ENCODE measurements at regions of chr5 and their contacts with region 1.

Region 1: GRCh38 chr5:128905571-128906110 is 59.6 kb upstream of the SLC27A6 start:
- DNase-seq: peak in 3 of 6 donors; percentile 10 to 30 (median 18)
- ATAC-seq: peak; percentile 53 to 92 (median 88)
- H3K4me3 ChIP-seq: no peak overlapping the region
- H3K27ac ChIP-seq: no peak overlapping the region
- H3K4me1 ChIP-seq: no peaks in the 10 kb centered on the region
- H3K27me3 ChIP-seq: no peaks in the 10 kb centered on the region
- CTCF ChIP-seq: peak; percentile 37 to 70 (median 62)

Region 2: GRCh38 chr5:128956164-128956563 is 50.5 kb after region 1 on chr5:
- intact Hi-C with region 1: no loop called
- DNase-seq: no peak
- ATAC-seq: no peak
- H3K4me3 ChIP-seq: no peak overlapping the region
- H3K27ac ChIP-seq: no peak overlapping the region
- H3K4me1 ChIP-seq: no peaks in the 10 kb centered on the region
- H3K27me3 ChIP-seq: no peaks in the 10 kb centered on the region
- CTCF ChIP-seq: no peak

Region 3: DNA sequence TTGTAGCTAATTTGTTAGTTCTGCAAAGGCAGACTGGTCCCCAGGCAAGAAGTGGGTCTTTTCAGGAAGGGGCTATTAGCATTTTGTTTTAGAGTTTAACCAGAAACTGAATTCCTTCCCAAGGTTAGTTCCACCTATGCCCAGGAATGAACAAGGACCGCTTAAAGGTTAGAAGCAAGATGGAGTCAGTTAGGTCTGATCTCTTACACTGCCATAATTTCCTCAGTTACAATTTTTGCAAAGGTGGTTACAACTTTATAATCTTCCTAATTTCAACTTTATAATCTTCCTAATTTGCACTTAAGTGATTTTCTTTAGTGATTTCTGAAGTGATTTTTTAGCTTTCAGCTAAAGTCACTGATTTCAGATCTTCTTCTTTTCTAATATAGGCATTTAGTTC is 273.3 kb after region 1 on chr5:
- intact Hi-C with region 1: no loop called
- DNase-seq: no peak
- ATAC-seq: no peak
- H3K4me3 ChIP-seq: no peak overlapping the region
- H3K27ac ChIP-seq: no peak overlapping the region
- H3K4me1 ChIP-seq: no peaks in the 10 kb centered on the region
- H3K27me3 ChIP-seq: no peaks in the 10 kb centered on the region
- CTCF ChIP-seq: no peak

Region 4: GRCh38 chr5:129767906-129768380 is 862.3 kb after region 1 on chr5:
- intact Hi-C with region 1: loop called in 1 of 3 experiments (anchors 10 kb)
- DNase-seq: peak in 4 of 6 donors; percentile 22 to 77 (median 63)
- ATAC-seq: peak; percentile 77 to 96 (median 94)
- H3K4me3 ChIP-seq: no peak overlapping the region
- H3K27ac ChIP-seq: no peak overlapping the region
- H3K4me1 ChIP-seq: peaks cover 0 to 15% (median 0%) of the 10 kb centered on the region in 3 donors
- H3K27me3 ChIP-seq: no peaks in the 10 kb centered on the region
- CTCF ChIP-seq: peak; percentile 94 to 98 (median 95)

Measured in pancreas (tissue), 10 donors.